Heart left ventricle (tissue), 16 donors: ENCODE measurements at regions of chr1 and their contacts with region 1.

Region 1: GRCh38 chr1:66607458-66607857 is 73.5 kb downstream of the SGIP1 start:
- DNase-seq: no peak
- ATAC-seq: no peak
- H3K4me3 ChIP-seq: no peak overlapping the region
- H3K27ac ChIP-seq: no peak overlapping the region
- H3K4me1 ChIP-seq: peaks cover 0 to 6% (median 0%) of the 10 kb centered on the region in 12 donors
- H3K27me3 ChIP-seq: no peaks in the 10 kb centered on the region
- CTCF ChIP-seq: no peak
- POLR2A ChIP-seq: no peak

Region 2: GRCh38 chr1:66452982-66453381 is 154.5 kb before region 1 on chr1:
- intact Hi-C with region 1: no loop called
- DNase-seq: no peak
- ATAC-seq: no peak
- H3K4me3 ChIP-seq: no peak overlapping the region
- H3K27ac ChIP-seq: no peak overlapping the region
- H3K4me1 ChIP-seq: peaks cover 0 to 24% (median 10%) of the 10 kb centered on the region in 12 donors
- H3K27me3 ChIP-seq: no peaks in the 10 kb centered on the region
- CTCF ChIP-seq: no peak
- POLR2A ChIP-seq: no peak

Region 3: DNA sequence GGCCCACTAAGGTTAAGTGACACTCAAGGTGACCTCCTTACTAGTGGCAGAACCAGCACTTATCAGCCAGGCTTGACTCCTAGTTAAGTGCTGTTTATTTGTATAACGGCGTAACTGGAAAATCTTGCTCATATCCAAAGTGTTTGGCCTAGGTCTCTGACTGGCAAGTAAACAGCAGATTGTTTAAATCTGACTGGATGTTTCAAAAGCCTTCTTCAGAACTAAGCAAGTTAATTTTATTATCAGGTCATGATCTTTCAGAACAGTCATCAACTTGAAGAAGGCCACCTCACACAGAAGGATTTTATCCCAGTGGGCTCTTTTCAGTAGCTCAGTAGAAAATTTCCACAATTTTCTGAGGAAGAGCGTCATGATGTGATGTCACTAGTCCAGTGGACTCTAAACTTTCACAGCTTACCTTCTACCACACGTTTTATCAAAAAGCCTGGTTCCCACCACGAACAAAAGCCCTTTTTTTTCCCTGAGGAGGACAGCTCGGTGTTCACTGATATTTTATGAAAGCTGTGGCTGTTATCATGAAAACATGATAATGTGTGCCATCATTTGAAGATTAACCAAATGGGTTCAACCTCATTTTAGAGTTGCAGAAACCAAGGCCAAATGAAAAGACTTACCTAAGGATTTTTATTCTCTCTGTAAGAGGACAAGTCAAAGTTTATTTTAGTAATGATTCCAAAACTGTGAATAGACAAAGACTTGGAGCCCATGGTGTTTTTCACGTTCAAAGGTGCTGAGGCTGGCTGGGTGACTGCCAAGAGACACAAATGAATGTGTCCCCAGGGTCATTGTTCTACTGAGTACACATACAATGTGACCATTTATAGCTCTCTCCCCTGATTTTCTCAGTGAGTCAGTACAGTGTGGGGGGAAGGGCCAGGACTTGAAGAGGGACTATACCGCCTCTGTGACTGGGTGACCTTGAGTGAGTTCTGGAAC is 64.4 kb before region 1 on chr1:
- intact Hi-C with region 1: loop called in 1 of 10 experiments (anchors 5 kb)
- DNase-seq: peak; percentile 79 to 89 (median 87)
- ATAC-seq: peak; percentile 95 to 97 (median 96)
- H3K4me3 ChIP-seq: no peak overlapping the region
- H3K27ac ChIP-seq: peak overlapping the region; percentile 63 to 86 (median 78)
- H3K4me1 ChIP-seq: peaks cover 10 to 74% (median 28%) of the 10 kb centered on the region in 12 donors
- H3K27me3 ChIP-seq: no peaks in the 10 kb centered on the region
- CTCF ChIP-seq: no peak
- POLR2A ChIP-seq: no peak